Activated CD4-positive, alpha-beta memory T cell treated with anti-CD3 and anti-CD28 coated beads, Interleukin-2, amount 10 ng/mL, durations not matched to agents 7 days and 5 days (primary cell): ENCODE measurements at regions of chr6 and their contacts with region 1.

Region 1: DNA sequence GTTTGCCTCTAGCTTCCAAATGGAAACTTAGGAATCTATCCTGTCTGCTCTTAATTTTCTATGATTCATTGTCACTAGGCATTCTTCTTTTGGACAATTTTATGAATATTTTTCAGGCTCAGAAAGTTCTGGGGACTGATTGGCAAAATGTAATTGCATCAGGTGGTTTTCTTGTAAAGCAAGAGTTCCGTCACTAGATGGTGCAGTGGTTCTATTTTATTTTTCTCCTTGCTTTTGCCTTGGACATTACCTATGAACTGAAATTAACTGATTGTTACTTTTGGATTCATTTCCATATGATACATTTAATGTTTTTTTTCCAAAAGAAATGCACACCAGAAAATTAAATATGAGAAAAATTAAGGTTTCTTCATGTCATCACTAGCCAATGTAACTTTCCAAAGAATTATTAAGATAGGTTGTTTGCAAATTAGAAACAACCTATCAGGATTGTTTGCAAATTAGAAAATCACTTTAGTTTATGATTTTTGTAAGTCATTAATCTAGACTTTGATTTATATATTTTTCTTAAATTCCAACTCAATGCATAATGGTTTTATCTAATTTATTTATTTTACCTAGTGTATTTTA is 48.0 kb downstream of the TMEM170B start:
- DNase-seq: no peak
- H3K4me3 Mint-ChIP-seq: no peak overlapping the region
- H3K27ac Mint-ChIP-seq: no peak overlapping the region
- H3K4me1 Mint-ChIP-seq: no peaks in the 10 kb centered on the region
- H3K27me3 Mint-ChIP-seq: peaks cover 4% of the 10 kb centered on the region

Region 2: DNA sequence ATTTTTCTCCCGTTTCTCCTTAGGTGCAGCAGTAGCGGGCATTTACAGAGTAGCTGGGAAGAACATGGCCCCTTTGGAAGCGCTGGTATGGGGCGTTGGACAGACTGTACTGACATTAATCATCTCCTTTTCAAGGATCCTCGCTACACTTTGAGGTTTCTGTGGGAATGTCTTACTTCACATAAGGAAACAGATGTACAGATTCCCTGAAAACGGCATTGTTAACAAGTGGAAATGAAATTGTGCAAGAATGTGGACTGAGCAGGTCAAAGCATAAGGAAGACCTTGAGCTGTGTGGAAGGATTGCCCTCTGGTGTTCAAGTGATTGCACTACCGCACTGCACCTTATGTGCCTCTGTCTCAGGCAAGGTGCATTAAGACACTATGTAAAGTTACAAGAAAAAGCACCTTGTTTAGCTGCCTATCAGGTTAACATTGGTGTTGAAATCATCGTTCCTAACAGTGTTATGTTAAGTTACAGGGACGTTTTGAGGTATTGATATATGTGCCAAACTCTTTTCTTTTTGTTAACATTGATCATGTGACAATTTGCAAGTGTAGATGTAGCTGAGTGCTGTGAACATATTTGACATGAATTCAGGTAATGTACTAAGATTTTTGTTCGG is 10.0 kb before region 1 on chr6:
- CTCF ChIA-PET with region 1: interaction called, 19 read pairs
- POLR2A ChIA-PET with region 1: no interaction called
- DNase-seq: peak; percentile 57
- H3K4me3 Mint-ChIP-seq: no peak overlapping the region
- H3K27ac Mint-ChIP-seq: no peak overlapping the region
- H3K4me1 Mint-ChIP-seq: no peaks in the 10 kb centered on the region
- H3K27me3 Mint-ChIP-seq: no peaks in the 10 kb centered on the region

Region 3: DNA sequence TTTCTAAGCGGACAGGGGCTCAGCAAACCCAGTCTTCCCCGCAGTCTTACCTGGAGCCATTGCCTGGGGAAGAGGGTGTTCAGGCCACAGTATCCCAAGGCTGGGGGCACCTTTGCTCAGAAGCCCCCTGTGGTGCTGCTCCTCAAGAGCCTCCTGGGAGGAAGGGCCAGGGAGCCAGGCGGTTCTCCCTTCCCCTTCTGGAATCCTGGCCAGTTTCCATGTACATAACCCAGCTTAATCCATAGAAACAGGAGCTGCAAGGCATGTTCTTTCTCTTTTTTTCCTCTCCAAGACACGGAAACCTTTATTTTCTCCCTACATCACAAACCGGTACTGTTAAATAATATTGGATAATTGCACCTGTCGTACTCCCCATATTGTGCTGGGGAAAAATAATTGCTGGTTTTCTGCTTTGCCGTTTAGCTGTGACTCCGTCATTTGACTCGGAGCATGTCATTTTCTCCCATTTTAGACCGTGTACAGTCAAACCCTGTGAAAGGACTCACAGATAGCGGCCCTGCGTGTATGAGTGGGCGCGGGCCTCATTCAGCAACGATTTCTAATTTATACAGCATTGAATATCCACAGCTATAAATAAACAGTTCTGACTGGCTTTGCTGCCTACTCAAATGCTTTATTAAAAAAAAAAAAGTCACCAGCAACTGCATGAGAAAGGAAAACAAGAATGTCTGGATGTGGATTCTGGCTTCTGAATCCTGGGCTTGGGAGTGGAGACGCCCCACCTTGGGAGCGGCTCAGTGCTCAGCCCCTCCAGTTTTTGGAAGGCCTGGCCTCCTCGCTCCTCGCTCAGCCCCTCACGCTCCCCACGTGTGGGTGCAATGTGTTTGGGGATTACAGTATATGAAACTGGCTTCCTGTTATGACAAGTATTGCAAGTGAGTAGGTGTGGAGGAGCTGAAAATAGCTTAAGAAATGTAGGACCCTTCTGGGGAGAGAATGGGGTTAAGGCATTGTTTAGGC is 125.8 kb after region 1 on chr6:
- CTCF ChIA-PET with region 1: no interaction called
- POLR2A ChIA-PET with region 1: no interaction called
- DNase-seq: no peak
- H3K4me3 Mint-ChIP-seq: no peak overlapping the region
- H3K27ac Mint-ChIP-seq: peak overlapping the region; percentile 68
- H3K4me1 Mint-ChIP-seq: peaks cover 54% of the 10 kb centered on the region
- H3K27me3 Mint-ChIP-seq: no peaks in the 10 kb centered on the region

Region 4: GRCh38 chr6:11791354-11792107 is 206.0 kb after region 1 on chr6:
- CTCF ChIA-PET with region 1: no interaction called
- POLR2A ChIA-PET with region 1: no interaction called
- DNase-seq: no peak
- H3K4me3 Mint-ChIP-seq: no peak overlapping the region
- H3K27ac Mint-ChIP-seq: no peak overlapping the region
- H3K4me1 Mint-ChIP-seq: no peaks in the 10 kb centered on the region
- H3K27me3 Mint-ChIP-seq: peaks cover 4% of the 10 kb centered on the region